Aorta (tissue), 5 donors: ENCODE measurements at regions of chr4 and their contacts with region 1.

Region 1: GRCh38 chr4:140637836-140638235 is 69.1 kb upstream of the UCP1 start:
- DNase-seq: no peak
- ATAC-seq: no peak
- H3K4me3 ChIP-seq: no peak overlapping the region
- H3K27ac ChIP-seq: no peak overlapping the region
- H3K4me1 ChIP-seq: no peaks in the 10 kb centered on the region
- H3K27me3 ChIP-seq: no peaks in the 10 kb centered on the region

Region 2: DNA sequence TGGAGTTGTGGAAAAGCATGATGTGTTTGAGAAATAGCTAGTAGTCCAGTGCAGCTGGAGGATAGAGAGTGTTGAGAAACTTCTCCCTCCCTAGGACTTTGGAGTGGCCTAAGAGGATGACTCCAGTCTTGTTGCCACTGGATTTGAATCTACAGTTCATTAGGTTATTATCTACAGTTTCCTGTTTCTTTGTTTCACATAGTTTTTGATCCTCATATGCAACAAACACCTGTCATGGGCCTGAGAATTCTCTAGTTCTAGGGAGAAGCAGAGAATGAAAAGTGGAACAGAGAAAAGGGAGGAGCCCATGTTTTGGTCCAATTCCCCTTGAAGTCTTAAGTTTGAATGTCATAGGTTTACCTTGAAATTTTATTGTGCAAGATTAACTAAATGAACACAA is 192.0 kb after region 1 on chr4:
- intact Hi-C with region 1: loop called in 1 of 2 experiments (anchors 10 kb)
- DNase-seq: no peak
- ATAC-seq: no peak
- H3K4me3 ChIP-seq: no peak overlapping the region
- H3K27ac ChIP-seq: no peak overlapping the region
- H3K4me1 ChIP-seq: no peaks in the 10 kb centered on the region
- H3K27me3 ChIP-seq: no peaks in the 10 kb centered on the region

Region 3: GRCh38 chr4:140839888-140840790 is 202.3 kb after region 1 on chr4:
- intact Hi-C with region 1: loop called (anchors 10 kb)
- DNase-seq: no peak
- ATAC-seq: no peak
- H3K4me3 ChIP-seq: no peak overlapping the region
- H3K27ac ChIP-seq: no peak overlapping the region
- H3K4me1 ChIP-seq: no peaks in the 10 kb centered on the region
- H3K27me3 ChIP-seq: peaks cover 0 to 2% of the 10 kb centered on the region in 2 donors